ENCODE measurements at regions of chr14 and their contacts with region 1.

Region 1: GRCh38 chr14:31360919-31361662 is 59.3 kb downstream of the HEATR5A start:
- DNase-seq: no peak
- ATAC-seq: no peak
- H3K4me3 ChIP-seq: no peak overlapping the region
- H3K4me3 Mint-ChIP-seq: no peak overlapping the region
- H3K27ac ChIP-seq: no peak overlapping the region
- H3K27ac Mint-ChIP-seq: no peak overlapping the region
- H3K4me1 ChIP-seq: no peaks in the 10 kb centered on the region
- H3K4me1 Mint-ChIP-seq: peaks cover 0 to under 1% (median 0%) of the 10 kb centered on the region in 7 donors
- H3K27me3 ChIP-seq: no peaks in the 10 kb centered on the region
- H3K27me3 Mint-ChIP-seq: no peaks in the 10 kb centered on the region

Region 2: GRCh38 chr14:30980980-30981379 is 380.1 kb before region 1 on chr14:
- CTCF ChIA-PET with region 1: no interaction called
- POLR2A ChIA-PET with region 1: no interaction called
- intact Hi-C with region 1: loop called (anchors 1 to 2 kb)
- DNase-seq: no peak
- ATAC-seq: no peak
- H3K4me3 ChIP-seq: no peak overlapping the region
- H3K4me3 Mint-ChIP-seq: no peak overlapping the region
- H3K27ac ChIP-seq: no peak overlapping the region
- H3K27ac Mint-ChIP-seq: peak overlapping the region in 7 of 9 donors; percentile 19 to 74 (median 50)
- H3K4me1 ChIP-seq: no peaks in the 10 kb centered on the region
- H3K4me1 Mint-ChIP-seq: peaks cover 7 to 40% (median 32%) of the 10 kb centered on the region in 7 donors
- H3K27me3 ChIP-seq: no peaks in the 10 kb centered on the region
- H3K27me3 Mint-ChIP-seq: no peaks in the 10 kb centered on the region

Region 3: DNA sequence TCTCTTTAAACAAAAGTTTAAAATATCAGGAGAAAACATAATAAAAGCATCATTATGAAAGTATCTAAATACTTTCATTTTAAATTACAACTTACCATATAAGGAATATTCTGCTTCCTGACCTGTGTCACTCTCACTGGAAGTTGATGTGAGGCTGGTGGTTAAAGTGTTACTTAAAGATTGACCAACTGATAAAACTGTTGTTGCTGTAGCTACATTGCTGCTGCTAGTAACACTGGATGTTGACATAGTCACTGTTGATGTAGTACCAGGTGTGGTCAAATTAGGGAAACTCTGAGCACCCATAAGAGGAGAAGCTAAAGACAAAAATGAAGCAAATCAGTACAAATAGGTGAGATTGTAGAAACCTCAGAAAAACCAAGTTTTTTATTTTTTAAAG is 233.4 kb before region 1 on chr14:
- CTCF ChIA-PET with region 1: no interaction called
- POLR2A ChIA-PET with region 1: no interaction called
- intact Hi-C with region 1: loop called (anchors 1 to 5 kb)
- DNase-seq: peak in 5 of 9 donors; percentile 2 to 42 (median 27)
- ATAC-seq: peak; percentile 91
- H3K4me3 ChIP-seq: no peak overlapping the region
- H3K4me3 Mint-ChIP-seq: peak overlapping the region in 3 of 10 donors; percentile 7 to 67 (median 18)
- H3K27ac ChIP-seq: no peak overlapping the region
- H3K27ac Mint-ChIP-seq: peak overlapping the region in 5 of 9 donors; percentile 11 to 75 (median 52)
- H3K4me1 ChIP-seq: peaks cover 9 to 30% of the 10 kb centered on the region in 2 donors
- H3K4me1 Mint-ChIP-seq: peaks cover 16 to 47% (median 39%) of the 10 kb centered on the region in 7 donors
- H3K27me3 ChIP-seq: no peaks in the 10 kb centered on the region
- H3K27me3 Mint-ChIP-seq: peaks cover 0 to 2% (median 0%) of the 10 kb centered on the region in 5 donors

Region 4: DNA sequence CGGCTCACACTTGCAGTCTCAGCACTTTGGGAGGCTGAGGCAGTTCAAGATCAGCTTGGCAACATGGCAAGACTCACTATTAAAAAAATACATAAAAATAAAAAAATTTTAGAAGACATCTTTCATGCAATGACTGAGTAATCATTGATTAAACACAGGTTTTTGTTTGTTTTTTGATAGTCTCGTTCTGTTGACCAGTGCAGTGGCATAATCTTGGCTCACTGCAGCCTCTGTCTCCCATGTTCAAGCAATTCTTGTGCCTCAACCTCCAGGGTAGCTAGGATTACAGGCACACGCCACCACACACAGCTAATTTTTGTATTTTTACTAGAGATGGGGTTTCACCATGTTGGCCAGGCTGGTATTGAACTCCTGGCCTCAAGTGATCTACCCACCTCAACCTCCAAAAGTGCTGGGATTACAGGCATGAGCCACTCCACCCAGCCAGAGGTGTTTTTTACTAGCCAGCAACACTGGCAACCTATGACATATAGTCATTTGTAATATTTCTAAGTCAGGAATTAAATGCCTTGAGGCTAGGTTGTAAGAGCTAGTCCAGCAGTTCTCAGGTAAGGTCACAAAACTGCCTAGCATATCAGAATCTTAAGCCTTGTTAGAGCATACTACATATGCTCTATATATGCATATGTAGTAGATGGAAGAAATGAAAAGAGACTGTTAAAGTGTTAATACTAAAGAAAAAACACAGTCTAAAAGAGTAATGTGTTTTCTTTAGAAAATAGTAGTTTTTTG is 180.6 kb before region 1 on chr14:
- CTCF ChIA-PET with region 1: no interaction called
- POLR2A ChIA-PET with region 1: no interaction called
- intact Hi-C with region 1: loop called in 1 of 2 experiments (anchors 5 kb)
- DNase-seq: no peak
- ATAC-seq: no peak
- H3K4me3 ChIP-seq: no peak overlapping the region
- H3K4me3 Mint-ChIP-seq: no peak overlapping the region
- H3K27ac ChIP-seq: no peak overlapping the region
- H3K27ac Mint-ChIP-seq: peak overlapping the region in 5 of 9 donors; percentile 14 to 60 (median 36)
- H3K4me1 ChIP-seq: no peaks in the 10 kb centered on the region
- H3K4me1 Mint-ChIP-seq: peaks cover 0 to 24% (median 15%) of the 10 kb centered on the region in 7 donors
- H3K27me3 ChIP-seq: no peaks in the 10 kb centered on the region
- H3K27me3 Mint-ChIP-seq: no peaks in the 10 kb centered on the region

Region 5: DNA sequence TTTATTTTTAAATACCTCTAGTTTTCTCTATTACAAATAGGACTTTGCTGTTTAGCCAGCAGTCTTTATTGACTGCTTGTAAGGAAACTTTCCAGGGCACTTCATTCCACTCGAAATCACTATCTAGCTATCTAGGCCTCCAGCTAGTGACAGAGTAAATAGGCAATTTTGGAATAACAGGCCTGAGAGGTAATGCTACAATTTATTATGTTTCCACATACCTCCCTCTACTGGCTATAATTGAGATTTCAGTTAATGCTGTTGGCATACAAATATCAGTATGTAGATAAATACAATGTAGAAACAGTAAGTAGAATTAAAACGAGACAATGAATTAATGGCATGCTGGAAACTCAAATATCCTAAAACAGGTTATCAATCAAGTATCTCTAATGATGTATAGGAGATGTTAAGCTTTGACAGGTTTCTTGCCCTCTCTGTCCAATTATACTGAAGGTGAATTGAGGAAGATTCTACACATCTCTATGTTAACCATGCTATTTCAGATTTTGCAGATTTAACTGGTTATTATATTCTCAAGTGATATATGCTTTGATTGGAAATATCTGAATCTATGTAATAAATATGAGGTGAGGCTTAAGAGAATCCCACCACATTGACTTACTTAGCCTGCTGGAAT is 89.0 kb after region 1 on chr14:
- CTCF ChIA-PET with region 1: no interaction called
- POLR2A ChIA-PET with region 1: no interaction called
- intact Hi-C with region 1: no loop called
- DNase-seq: peak in 2 of 9 donors; percentile 1 to 13
- ATAC-seq: peak; percentile 75
- H3K4me3 ChIP-seq: no peak overlapping the region
- H3K4me3 Mint-ChIP-seq: no peak overlapping the region
- H3K27ac ChIP-seq: no peak overlapping the region
- H3K27ac Mint-ChIP-seq: peak overlapping the region in 2 of 9 donors; percentile 20 to 31
- H3K4me1 ChIP-seq: no peaks in the 10 kb centered on the region
- H3K4me1 Mint-ChIP-seq: peaks cover 0 to 23% (median 9%) of the 10 kb centered on the region in 7 donors
- H3K27me3 ChIP-seq: no peaks in the 10 kb centered on the region
- H3K27me3 Mint-ChIP-seq: no peaks in the 10 kb centered on the region

Measured in naive thymus-derived CD4-positive, alpha-beta T cell (primary cell).